ENCODE measurements at regions of chr16 and their contacts with region 1.

Region 1: GRCh38 chr16:16188827-16189226 is 34.5 kb downstream of the ABCC6 start:
- DNase-seq: no peak
- H3K4me3 ChIP-seq: no peak overlapping the region
- CTCF ChIP-seq: no peak

Region 2: DNA sequence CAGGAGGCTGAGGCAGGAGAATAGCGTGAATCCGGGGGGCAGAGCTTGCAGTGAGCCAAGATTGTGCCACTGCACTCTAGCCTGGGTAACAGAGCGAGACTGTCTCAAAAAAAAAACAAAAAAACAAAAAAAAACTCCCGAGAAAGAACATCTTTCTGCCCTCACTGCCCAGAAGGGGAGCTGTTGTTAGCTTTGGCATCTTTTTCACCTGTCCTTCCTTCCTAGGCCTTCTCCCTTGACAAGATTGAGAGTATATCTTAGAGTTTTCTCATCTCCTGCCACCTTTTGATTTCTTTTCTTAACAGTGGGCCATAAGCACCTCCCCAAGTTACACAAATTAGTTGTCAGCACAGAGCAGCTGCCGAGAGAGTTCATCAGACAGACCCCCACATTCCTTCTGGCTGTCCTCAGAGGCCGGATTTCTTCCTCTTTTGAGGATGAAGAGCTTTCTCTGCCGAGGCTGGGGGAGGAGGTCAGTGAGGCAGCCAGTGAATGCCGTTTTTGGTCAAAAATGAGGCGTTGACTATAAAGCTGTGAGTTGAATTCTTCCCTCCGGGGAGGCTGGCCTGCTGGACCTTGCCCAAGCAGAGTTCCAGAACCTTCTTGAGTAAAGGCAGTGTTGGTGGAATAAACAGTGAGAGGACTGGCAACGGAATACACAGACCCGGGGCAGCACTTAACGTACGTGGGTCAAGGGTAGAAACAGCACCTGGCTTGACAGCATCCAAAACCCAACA is 92.5 kb before region 1 on chr16:
- CTCF ChIA-PET with region 1: no interaction called
- POLR2A ChIA-PET with region 1: no interaction called
- DNase-seq: peak; percentile 41
- H3K4me3 ChIP-seq: no peak overlapping the region
- CTCF ChIP-seq: peak; percentile 39

Region 3: DNA sequence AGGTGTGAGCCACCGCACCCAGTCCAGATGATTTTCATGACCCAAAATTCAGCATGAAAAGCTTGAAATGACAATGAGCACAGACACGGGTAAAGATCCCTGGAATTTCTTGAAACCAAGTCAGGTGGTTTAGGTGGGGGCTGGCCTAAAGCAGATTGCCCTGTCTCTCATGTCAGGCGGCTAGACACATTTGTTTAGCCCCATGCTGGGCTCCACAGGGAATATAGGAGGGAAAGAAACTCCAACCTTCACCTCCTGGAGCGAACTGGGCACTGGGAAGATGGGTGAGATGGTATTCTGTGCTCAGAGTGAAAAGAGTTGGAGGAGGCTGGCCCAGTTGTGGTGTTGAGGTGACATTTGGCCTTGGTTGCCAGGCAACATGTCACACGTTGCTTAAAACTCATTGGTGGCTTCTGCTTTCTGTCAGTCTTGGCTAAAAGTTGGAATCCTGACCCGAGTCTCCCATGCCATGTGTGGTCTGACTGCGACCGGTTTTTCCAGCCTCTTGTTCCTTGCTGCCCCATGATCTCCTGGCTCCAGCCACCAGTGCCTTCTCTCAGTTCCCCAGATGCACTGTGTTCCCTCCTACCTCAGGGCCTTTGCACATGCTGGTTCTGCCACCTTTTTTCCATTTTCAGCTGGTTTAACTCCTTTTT is 79.2 kb before region 1 on chr16:
- CTCF ChIA-PET with region 1: no interaction called
- POLR2A ChIA-PET with region 1: no interaction called
- DNase-seq: no peak
- H3K4me3 ChIP-seq: no peak overlapping the region
- CTCF ChIP-seq: no peak

Region 4: DNA sequence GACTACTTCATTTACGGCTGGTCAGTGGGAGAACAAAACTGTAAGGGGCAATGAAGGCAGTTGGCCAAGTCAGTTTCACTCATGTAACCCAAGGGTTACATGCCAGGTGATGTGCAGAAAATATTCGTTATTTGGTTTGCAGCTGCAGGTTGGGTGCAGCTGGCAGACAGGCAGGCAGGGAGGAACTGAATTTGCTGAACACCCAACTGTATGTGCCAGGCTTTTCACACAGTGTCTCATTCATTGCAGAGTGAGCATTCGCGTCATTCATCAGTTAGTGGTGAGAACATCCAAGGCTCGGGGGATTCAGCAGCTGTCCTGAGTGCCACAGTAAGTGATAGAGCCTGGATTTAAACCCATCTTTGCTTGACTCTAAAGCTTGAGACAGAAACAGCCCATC is 25.3 kb before region 1 on chr16:
- CTCF ChIA-PET with region 1: interaction called, 11 read pairs
- POLR2A ChIA-PET with region 1: no interaction called
- DNase-seq: no peak
- H3K4me3 ChIP-seq: no peak overlapping the region
- CTCF ChIP-seq: no peak

Region 5: GRCh38 chr16:16178455-16179162 is 10.2 kb before region 1 on chr16:
- CTCF ChIA-PET with region 1: interaction called, 17 read pairs
- POLR2A ChIA-PET with region 1: no interaction called
- DNase-seq: no peak
- H3K4me3 ChIP-seq: no peak overlapping the region
- CTCF ChIP-seq: no peak